ENCODE measurements at regions of chr17 and their contacts with region 1.

Region 1: GRCh38 chr17:6913608-6914443 is 82.0 kb upstream of the ALOX12 start:
- DNase-seq: peak; percentile 77
- ATAC-seq: peak; percentile 89
- H3K4me3 Mint-ChIP-seq: peak overlapping the region; percentile 83
- H3K27ac Mint-ChIP-seq: no peak overlapping the region
- H3K4me1 Mint-ChIP-seq: peaks cover 18% of the 10 kb centered on the region
- H3K27me3 Mint-ChIP-seq: peaks cover 24% of the 10 kb centered on the region
- CTCF ChIP-seq: peak; percentile 38

Region 2: GRCh38 chr17:6435968-6436367 is 477.9 kb before region 1 on chr17:
- CTCF ChIA-PET with region 1: no interaction called
- POLR2A ChIA-PET with region 1: no interaction called
- intact Hi-C with region 1: no loop called
- DNase-seq: peak; percentile 39
- ATAC-seq: peak; percentile 95
- H3K4me3 Mint-ChIP-seq: no peak overlapping the region
- H3K27ac Mint-ChIP-seq: no peak overlapping the region
- H3K4me1 Mint-ChIP-seq: peaks cover 2% of the 10 kb centered on the region
- H3K27me3 Mint-ChIP-seq: peaks cover 36% of the 10 kb centered on the region
- CTCF ChIP-seq: no peak

Region 3: GRCh38 chr17:6666077-6666521 is 247.7 kb before region 1 on chr17:
- CTCF ChIA-PET with region 1: no interaction called
- POLR2A ChIA-PET with region 1: no interaction called
- intact Hi-C with region 1: loop called (anchors 5 kb)
- DNase-seq: no peak
- ATAC-seq: peak; percentile 95
- H3K4me3 Mint-ChIP-seq: no peak overlapping the region
- H3K27ac Mint-ChIP-seq: no peak overlapping the region
- H3K4me1 Mint-ChIP-seq: peaks cover 34% of the 10 kb centered on the region
- H3K27me3 Mint-ChIP-seq: no peaks in the 10 kb centered on the region
- CTCF ChIP-seq: no peak

Region 4: DNA sequence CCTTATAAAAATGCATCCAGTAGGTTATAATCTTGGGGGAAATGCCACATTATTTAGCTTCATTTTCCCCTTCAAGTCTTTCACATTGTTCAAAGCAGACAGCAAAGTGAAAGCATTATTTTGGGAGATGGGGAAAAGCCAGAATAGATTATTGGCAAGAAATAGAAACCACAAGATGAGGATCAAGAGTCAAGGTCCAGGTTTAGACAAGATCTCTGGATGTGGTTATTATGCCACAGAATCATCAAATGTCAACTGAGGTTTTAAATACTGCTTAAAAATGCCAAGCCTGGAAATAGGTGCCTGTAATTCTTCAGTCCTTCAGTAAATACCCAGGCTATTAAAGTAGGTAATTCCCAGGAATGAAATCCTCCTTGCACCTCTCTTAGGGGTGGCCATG is 16.9 kb after region 1 on chr17:
- CTCF ChIA-PET with region 1: interaction called, 13 read pairs
- POLR2A ChIA-PET with region 1: no interaction called
- intact Hi-C with region 1: no loop called
- DNase-seq: no peak
- ATAC-seq: no peak
- H3K4me3 Mint-ChIP-seq: no peak overlapping the region
- H3K27ac Mint-ChIP-seq: no peak overlapping the region
- H3K4me1 Mint-ChIP-seq: peaks cover under 1% of the 10 kb centered on the region
- H3K27me3 Mint-ChIP-seq: peaks cover 6% of the 10 kb centered on the region
- CTCF ChIP-seq: no peak

Region 5: DNA sequence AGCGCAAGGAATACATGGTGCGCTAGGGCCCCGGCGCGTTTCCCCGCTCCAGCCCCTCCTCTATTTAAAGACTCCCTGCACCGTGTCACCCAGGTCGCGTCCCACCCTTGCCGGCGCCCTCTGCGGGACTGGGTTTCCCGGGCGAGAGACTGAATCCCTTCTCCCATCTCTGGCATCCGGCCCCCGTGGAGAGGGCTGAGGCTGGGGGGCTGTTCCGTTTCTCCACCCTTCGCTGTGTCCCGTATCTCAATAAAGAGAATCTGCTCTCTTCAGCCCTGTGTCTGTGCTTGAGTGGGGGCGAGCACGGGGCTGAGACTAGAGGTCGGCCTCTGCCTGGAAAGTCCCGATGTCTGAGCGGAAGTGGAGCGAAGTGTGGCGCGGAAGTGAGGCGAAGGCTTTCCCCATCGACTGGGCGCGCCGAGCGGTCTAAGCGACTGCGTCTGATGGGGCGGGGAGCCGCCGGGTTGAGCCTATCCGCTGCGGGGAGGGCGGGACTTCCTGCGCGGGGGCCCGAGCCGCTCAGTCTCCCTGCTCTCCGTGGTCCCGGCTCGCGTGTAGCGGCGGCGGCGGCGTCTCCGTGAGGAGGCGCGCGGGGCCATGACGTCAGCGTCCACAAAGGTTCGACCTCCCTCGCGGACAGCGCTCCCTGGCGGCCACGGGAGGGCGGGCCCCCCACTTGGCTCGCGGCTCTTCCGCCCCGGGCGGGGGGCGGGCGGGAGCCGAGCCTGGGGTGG is 100.6 kb after region 1 on chr17:
- CTCF ChIA-PET with region 1: interaction called, 7 read pairs
- POLR2A ChIA-PET with region 1: interaction called, 10 read pairs
- intact Hi-C with region 1: no loop called
- DNase-seq: peak; percentile 96
- ATAC-seq: peak; percentile 84
- H3K4me3 Mint-ChIP-seq: peak overlapping the region; percentile 95
- H3K27ac Mint-ChIP-seq: peak overlapping the region; percentile 100
- H3K4me1 Mint-ChIP-seq: peaks cover 61% of the 10 kb centered on the region
- H3K27me3 Mint-ChIP-seq: no peaks in the 10 kb centered on the region
- CTCF ChIP-seq: no peak

Region 6: DNA sequence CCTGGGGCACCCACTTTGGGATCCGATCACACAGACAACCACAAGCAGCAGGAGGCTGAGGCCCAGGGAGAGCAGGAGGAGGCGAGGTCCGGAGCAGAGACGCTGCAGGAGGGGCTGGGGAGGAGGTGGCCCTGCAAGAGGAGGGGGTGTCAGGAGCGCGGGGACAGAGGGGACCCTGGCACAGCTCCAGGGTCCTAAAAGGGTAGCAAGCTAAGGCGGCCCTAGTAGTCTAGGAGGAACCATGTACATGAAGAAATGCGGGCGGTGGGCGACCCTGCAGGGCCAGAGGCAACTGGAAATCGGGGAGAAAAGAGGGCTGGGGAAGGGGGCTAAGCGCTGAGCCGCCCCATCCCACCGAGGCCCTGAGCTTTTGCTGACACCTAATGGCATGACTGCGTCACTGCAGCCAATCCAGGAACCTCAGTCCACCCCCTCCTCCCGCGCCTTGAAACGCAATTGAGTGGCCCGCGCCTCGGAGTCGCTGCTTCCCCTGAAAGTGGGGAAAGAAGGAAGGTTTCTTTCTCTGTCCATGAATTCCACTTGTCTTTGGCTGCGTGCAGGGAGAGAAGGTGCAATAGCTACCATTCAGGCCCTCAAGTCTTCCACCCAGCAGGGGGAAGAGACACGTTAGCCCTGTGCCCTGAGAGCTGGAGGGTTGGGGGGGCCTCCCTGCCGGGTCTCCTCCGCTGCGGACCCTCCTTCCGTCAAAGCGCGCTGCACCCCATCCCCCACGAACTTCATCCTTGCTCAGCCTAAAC is 263.5 kb after region 1 on chr17:
- CTCF ChIA-PET with region 1: interaction called, 3 read pairs
- POLR2A ChIA-PET with region 1: no interaction called
- intact Hi-C with region 1: loop called (anchors 2 kb)
- DNase-seq: peak; percentile 50
- ATAC-seq: peak; percentile 95
- H3K4me3 Mint-ChIP-seq: peak overlapping the region; percentile 52
- H3K27ac Mint-ChIP-seq: no peak overlapping the region
- H3K4me1 Mint-ChIP-seq: peaks cover 9% of the 10 kb centered on the region
- H3K27me3 Mint-ChIP-seq: peaks cover 15% of the 10 kb centered on the region
- CTCF ChIP-seq: no peak

Measured in activated B cell treated with CpG ODN at 0.5 μM for 24 hours (primary cell).